CD8-positive, alpha-beta memory T cell (primary cell): ENCODE measurements at regions of chr14 and their contacts with region 1.

Region 1: GRCh38 chr14:90903101-90903500 is 86.9 kb upstream of the TTC7B start:
- DNase-seq: peak; percentile 24 to 66 (median 45)
- H3K4me3 ChIP-seq: no peak overlapping the region
- H3K4me3 Mint-ChIP-seq: no peak overlapping the region
- H3K27ac ChIP-seq: no peak overlapping the region
- H3K27ac Mint-ChIP-seq: peak overlapping the region in 2 of 8 donors; percentile 38 to 48
- H3K4me1 ChIP-seq: no peaks in the 10 kb centered on the region
- H3K4me1 Mint-ChIP-seq: peaks cover 0 to 7% (median 0%) of the 10 kb centered on the region in 3 donors
- H3K27me3 ChIP-seq: no peaks in the 10 kb centered on the region
- H3K27me3 Mint-ChIP-seq: no peaks in the 10 kb centered on the region

Region 2: GRCh38 chr14:90890322-90891020 is 12.6 kb before region 1 on chr14:
- CTCF ChIA-PET with region 1: interaction called, 10 read pairs
- POLR2A ChIA-PET with region 1: interaction called, 5 read pairs
- DNase-seq: no peak
- H3K4me3 ChIP-seq: no peak overlapping the region
- H3K4me3 Mint-ChIP-seq: no peak overlapping the region
- H3K27ac ChIP-seq: no peak overlapping the region
- H3K27ac Mint-ChIP-seq: peak overlapping the region in 2 of 8 donors; percentile 1 to 30
- H3K4me1 ChIP-seq: no peaks in the 10 kb centered on the region
- H3K4me1 Mint-ChIP-seq: no peaks in the 10 kb centered on the region
- H3K27me3 ChIP-seq: no peaks in the 10 kb centered on the region
- H3K27me3 Mint-ChIP-seq: no peaks in the 10 kb centered on the region